PC-9 (cell line): ENCODE measurements at regions of chr18 and their contacts with region 1.

Region 1: DNA sequence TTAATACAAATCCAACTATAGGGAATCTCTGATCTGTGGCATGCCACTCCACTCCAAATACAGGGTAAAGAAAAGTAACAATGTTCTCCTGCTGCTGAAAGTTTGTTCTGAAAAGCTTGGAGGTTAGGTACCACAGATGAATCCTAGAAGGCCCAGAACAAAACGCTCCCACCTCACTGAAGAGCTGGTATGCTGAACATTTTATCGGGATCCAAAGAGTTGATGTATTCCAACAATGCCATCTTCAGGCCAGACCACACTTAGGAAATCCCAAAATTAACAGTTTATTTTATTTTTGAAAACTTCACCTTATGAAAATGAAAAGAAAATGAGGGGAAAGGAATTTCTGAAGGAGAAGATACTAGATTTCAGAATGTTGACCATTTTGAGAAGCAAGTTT is 145.1 kb upstream of the CDH19 start:
- DNase-seq: no peak
- H3K4me3 ChIP-seq: no peak overlapping the region
- H3K27ac ChIP-seq: no peak overlapping the region
- H3K4me1 ChIP-seq: no peaks in the 10 kb centered on the region
- H3K27me3 ChIP-seq: no peaks in the 10 kb centered on the region
- CTCF ChIP-seq: no peak; the same call in 1 of the 2 replicates

Region 2: DNA sequence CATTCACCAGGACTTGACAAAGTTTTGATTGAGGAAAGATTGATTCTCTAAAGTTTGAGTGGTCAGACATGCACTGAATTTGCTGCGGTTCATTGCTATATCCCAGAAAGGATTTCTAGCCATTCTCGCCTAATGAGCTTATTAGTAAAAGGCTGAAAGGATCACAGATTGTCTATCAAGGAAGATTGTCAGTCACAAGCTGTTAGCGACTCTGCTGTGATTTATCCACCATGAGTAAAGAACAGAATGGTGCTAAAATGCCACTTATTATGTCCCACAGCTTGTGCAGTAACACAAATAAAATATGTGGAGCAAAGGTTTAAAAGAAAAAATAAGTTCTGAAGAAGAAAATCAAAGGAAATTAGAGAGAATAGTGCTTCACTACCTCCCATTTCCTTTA is 1699.4 kb before region 1 on chr18:
- CTCF ChIA-PET with region 1: no interaction called
- POLR2A ChIA-PET with region 1: no interaction called
- intact Hi-C with region 1: no loop called
- DNase-seq: no peak
- H3K4me3 ChIP-seq: no peak overlapping the region
- H3K27ac ChIP-seq: no peak overlapping the region
- H3K4me1 ChIP-seq: no peaks in the 10 kb centered on the region
- H3K27me3 ChIP-seq: no peaks in the 10 kb centered on the region
- CTCF ChIP-seq: no peak

Region 3: GRCh38 chr18:66566616-66567015 is 182.4 kb before region 1 on chr18:
- CTCF ChIA-PET with region 1: no interaction called
- POLR2A ChIA-PET with region 1: no interaction called
- intact Hi-C with region 1: loop called (anchors 5 kb)
- DNase-seq: no peak
- H3K4me3 ChIP-seq: no peak overlapping the region
- H3K27ac ChIP-seq: no peak overlapping the region
- H3K4me1 ChIP-seq: no peaks in the 10 kb centered on the region
- H3K27me3 ChIP-seq: no peaks in the 10 kb centered on the region
- CTCF ChIP-seq: no peak

Region 4: GRCh38 chr18:66707473-66707872 is 41.6 kb before region 1 on chr18:
- CTCF ChIA-PET with region 1: no interaction called
- POLR2A ChIA-PET with region 1: no interaction called
- intact Hi-C with region 1: loop called (anchors 2 kb)
- DNase-seq: no peak
- H3K4me3 ChIP-seq: no peak overlapping the region
- H3K27ac ChIP-seq: no peak overlapping the region
- H3K4me1 ChIP-seq: no peaks in the 10 kb centered on the region
- H3K27me3 ChIP-seq: no peaks in the 10 kb centered on the region
- CTCF ChIP-seq: no peak

Region 5: DNA sequence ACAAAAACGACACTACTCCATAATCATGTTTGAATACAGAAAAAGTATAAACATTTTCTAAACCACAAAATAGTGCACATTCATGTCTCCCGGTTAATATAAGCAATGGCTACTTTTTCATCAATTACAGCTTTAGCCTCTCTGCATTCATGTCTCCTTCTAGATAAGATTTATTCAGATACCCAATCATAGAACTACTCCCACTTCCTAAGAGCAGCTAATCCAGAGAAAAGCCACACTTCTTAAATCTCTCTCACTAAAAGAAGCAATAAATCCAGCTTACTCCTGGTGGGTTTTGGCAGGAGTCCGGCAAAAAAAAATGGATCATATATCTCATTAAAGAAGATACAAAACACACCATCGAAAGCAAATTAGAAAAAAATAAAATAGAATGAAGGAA is 747.4 kb after region 1 on chr18:
- CTCF ChIA-PET with region 1: no interaction called
- POLR2A ChIA-PET with region 1: no interaction called
- intact Hi-C with region 1: no loop called
- DNase-seq: no peak
- H3K4me3 ChIP-seq: no peak overlapping the region
- H3K27ac ChIP-seq: no peak overlapping the region
- H3K4me1 ChIP-seq: no peaks in the 10 kb centered on the region
- H3K27me3 ChIP-seq: no peaks in the 10 kb centered on the region
- CTCF ChIP-seq: no peak